CD4-positive, alpha-beta T cell (primary cell): ENCODE measurements at regions of chr10 and their contacts with region 1.

Region 1: DNA sequence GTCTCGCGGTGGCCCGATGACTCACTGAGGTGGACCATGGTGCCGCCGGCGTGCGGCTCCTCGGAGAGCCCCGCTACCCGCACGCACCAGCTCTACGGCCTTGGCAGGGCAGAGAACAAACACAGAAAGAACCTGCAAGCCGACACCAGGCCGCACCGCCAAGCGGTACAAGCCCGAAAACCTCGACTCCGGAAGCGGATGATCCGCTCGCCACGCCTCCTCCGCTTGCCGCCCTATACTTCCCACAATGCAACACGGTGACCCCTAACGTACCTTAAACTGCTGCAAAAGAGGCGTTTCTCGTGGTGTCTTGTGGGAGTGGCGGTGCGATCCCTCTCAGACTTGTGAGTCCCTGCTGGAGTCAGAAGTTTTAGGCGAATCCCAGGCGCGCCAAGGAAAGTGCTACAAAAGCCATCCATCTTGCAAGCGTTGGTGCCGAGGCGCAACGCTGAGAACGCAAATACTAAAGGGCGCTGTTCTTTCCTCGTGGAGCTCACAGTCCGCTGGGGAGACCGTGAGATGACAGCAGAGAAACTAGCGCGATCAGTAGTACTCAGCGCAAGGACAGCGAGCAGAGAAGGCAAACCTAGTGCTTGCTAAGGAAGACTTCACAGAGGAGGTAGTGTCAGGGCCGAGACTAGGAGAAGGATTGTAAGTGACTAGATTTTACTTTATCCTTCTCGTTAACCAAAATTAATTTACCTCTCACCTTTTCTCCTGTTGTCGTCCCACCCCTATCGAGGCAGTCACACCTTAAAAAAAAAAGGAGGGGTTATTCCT is at the start of gene MRPS16:
- DNase-seq: peak; percentile 85 to 97 (median 90)
- ATAC-seq: peak; percentile 87
- H3K4me3 ChIP-seq: peak within 1 kb of the TSS; percentile 93
- H3K4me3 Mint-ChIP-seq: peak within 1 kb of the TSS; percentile 96
- H3K27ac ChIP-seq: peak within 1 kb of the TSS; percentile 78 to 91
- H3K27ac Mint-ChIP-seq: peak within 1 kb of the TSS; percentile 94
- H3K4me1 ChIP-seq: peaks cover 23% of the 10 kb centered on the region
- H3K4me1 Mint-ChIP-seq: peaks cover 40% of the 10 kb centered on the region
- H3K27me3 ChIP-seq: no peaks in the 10 kb centered on the region
- H3K27me3 Mint-ChIP-seq: no peaks in the 10 kb centered on the region
- CTCF ChIP-seq: no peak
- total RNA-seq, gene MRPS16: 28.3 to 31.9 TPM

Region 2: DNA sequence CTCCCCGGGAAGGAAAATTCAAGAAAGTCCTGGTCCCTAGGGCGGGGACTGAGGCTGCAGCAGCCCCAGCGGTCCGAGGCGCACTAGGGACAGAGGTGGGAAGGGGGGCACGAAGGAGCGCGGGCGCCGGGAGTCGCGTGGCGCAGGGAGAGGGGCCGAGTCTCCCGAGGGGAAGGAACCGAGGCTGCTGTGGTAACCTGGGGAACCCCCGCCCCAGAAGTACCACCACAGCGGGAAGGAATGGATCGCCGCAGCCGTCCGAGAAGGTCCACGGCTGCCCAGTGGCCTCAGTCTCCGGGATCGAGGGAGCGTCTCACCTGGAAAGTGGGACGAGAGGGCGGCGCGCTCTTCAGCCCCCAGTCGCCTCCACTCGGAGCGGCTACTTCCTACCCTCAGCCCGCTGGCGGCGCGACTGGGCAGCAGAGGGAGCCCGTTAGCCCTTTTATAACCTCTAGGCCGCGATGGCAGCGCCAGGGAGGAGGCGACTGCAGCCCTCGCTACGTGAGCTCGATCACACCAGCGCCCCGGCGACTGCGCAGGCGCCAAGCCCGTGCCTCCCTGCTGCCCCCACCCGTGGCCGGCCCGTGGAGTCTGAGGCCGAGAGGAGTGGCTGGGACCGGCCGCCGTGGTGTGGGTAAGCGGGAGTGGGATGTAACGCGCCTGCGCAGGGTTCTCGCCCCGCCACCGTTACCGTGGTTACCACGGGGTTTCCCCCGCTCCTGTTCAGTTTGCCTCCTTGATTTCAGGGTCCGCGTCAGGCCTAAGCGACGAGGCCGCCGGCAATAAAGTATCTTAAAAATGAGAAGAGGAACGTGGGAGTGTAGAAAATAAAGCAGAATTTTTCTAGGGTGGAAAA is 156.0 kb before region 1 on chr10 and contains the start of gene P4HA1:
- CTCF ChIA-PET with region 1: interaction called, 3 read pairs
- POLR2A ChIA-PET with region 1: interaction called, 19 read pairs
- intact Hi-C with region 1: loop called in 1 of 2 experiments (anchors 5 kb)
- DNase-seq: peak; percentile 93 to 100 (median 97)
- ATAC-seq: peak; percentile 84
- H3K4me3 ChIP-seq: peak within 1 kb of the TSS; percentile 97
- H3K4me3 Mint-ChIP-seq: peak within 1 kb of the TSS; percentile 94
- H3K27ac ChIP-seq: peak within 1 kb of the TSS; percentile 89 to 98
- H3K27ac Mint-ChIP-seq: peak within 1 kb of the TSS; percentile 87
- H3K4me1 ChIP-seq: peaks cover 7% of the 10 kb centered on the region
- H3K4me1 Mint-ChIP-seq: peaks cover 41% of the 10 kb centered on the region
- H3K27me3 ChIP-seq: no peaks in the 10 kb centered on the region
- H3K27me3 Mint-ChIP-seq: no peaks in the 10 kb centered on the region
- CTCF ChIP-seq: peak; percentile 79
- total RNA-seq, gene P4HA1: 9.0 to 9.1 TPM

Region 3: GRCh38 chr10:73358331-73359279 is 106.0 kb after region 1 on chr10 and contains the start of gene CFAP70:
- CTCF ChIA-PET with region 1: no interaction called
- POLR2A ChIA-PET with region 1: interaction called, 18 read pairs
- intact Hi-C with region 1: loop called (anchors 2 to 5 kb)
- DNase-seq: peak; percentile 85 to 98 (median 92)
- ATAC-seq: peak; percentile 98
- H3K4me3 ChIP-seq: peak within 1 kb of the TSS; percentile 82
- H3K4me3 Mint-ChIP-seq: peak within 1 kb of the TSS; percentile 98
- H3K27ac ChIP-seq: peak within 1 kb of the TSS; percentile 75 to 83
- H3K27ac Mint-ChIP-seq: peak within 1 kb of the TSS; percentile 95
- H3K4me1 ChIP-seq: peaks cover 7% of the 10 kb centered on the region
- H3K4me1 Mint-ChIP-seq: peaks cover 24% of the 10 kb centered on the region
- H3K27me3 ChIP-seq: no peaks in the 10 kb centered on the region
- H3K27me3 Mint-ChIP-seq: no peaks in the 10 kb centered on the region
- CTCF ChIP-seq: no peak
- total RNA-seq, gene CFAP70: 2.6 TPM

Region 4: DNA sequence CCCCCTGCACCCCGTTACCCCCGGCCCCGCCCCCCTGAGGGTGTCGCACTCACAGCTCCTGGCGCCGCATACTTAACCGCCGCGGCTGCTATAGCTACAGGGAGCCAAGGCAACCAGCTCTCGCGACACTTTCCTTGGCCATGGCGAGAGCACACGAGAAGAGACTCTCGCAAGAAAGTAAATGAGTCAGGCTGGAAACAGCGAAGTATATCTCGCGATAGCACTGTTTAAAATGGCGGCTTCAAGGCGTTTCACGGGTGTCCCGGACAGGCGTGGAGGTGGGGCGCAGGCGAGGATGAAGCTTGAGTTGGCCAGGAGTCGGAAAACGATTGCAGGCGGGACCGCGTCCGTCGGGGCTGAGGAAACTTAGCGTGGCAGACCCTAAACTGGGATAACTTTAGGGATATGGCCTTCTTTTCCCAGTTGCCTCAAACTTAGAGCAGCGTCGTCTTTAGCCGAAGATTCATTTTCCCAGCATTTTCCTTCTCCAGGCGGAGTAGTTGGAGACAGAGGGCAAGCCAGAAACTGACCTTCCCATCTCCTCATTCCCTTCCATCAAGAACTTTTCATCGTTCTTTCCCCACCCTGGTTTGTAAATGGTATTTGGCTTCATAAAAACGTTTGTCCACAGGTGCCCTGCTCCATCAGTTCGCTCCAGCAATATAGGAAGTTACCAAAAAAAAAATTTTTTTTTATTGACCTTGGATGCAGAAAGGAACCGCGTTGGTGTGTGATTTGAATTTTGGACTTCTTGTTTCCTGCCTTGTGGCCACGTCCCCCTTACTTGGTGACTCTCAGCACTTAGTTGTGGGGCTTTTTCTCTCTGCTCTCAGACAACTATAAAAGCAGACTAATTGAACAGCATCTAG is 373.5 kb after region 1 on chr10:
- CTCF ChIA-PET with region 1: no interaction called
- POLR2A ChIA-PET with region 1: interaction called, 8 read pairs
- intact Hi-C with region 1: loop called in 1 of 2 experiments (anchors 5 kb)
- DNase-seq: peak; percentile 84 to 99 (median 90)
- ATAC-seq: peak; percentile 94
- H3K4me3 ChIP-seq: peak overlapping the region; percentile 68
- H3K4me3 Mint-ChIP-seq: peak overlapping the region; percentile 91
- H3K27ac ChIP-seq: peak overlapping the region; percentile 62 to 66
- H3K27ac Mint-ChIP-seq: peak overlapping the region; percentile 90
- H3K4me1 ChIP-seq: peaks cover 17% of the 10 kb centered on the region
- H3K4me1 Mint-ChIP-seq: peaks cover 25% of the 10 kb centered on the region
- H3K27me3 ChIP-seq: no peaks in the 10 kb centered on the region
- H3K27me3 Mint-ChIP-seq: no peaks in the 10 kb centered on the region
- CTCF ChIP-seq: no peak

Region 5: DNA sequence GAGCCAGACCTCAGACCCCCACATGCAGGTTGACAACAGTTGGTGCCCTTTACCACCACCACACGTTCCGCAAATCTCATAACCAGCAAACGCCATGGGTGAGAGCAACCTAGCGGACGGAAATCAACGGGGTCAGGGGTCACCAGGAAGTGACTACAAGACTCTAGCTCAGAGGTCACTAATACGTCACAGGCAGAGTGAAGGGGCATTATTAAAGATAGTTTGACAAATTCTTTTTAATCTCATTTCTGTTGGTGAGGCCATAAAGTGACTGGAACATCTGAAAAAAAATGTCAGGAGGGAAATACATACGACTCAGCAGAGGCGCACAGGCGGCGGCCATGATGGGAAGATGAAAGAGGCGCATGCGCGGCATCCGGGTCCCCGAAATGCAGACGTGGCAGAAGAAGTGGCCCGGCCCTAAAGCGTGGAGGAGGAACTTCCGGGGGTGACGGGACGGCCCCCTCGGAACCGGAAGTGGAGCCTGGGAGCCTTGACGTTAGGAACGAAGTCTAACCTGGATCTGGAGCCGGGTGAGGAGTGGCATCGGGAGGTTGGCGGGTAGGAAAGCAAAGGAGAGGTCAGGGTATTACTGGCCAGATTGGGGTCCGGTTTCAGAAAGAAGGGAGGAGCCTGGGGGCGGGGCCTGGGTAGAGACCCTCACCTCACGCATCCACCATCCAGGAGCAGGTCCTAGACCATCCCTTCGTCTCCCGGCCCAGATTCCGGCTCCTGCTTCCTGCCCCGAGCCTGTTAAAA is 491.4 kb after region 1 on chr10 and contains the start of gene SEC24C:
- CTCF ChIA-PET with region 1: no interaction called
- POLR2A ChIA-PET with region 1: interaction called, 3 read pairs
- intact Hi-C with region 1: loop called in 1 of 2 experiments (anchors 10 kb)
- DNase-seq: peak; percentile 90 to 99 (median 94)
- ATAC-seq: peak; percentile 85
- H3K4me3 ChIP-seq: peak within 1 kb of the TSS; percentile 93
- H3K4me3 Mint-ChIP-seq: peak within 1 kb of the TSS; percentile 99
- H3K27ac ChIP-seq: peak within 1 kb of the TSS; percentile 90 to 99
- H3K27ac Mint-ChIP-seq: peak within 1 kb of the TSS; percentile 99
- H3K4me1 ChIP-seq: peaks cover 48% of the 10 kb centered on the region
- H3K4me1 Mint-ChIP-seq: peaks cover 41% of the 10 kb centered on the region
- H3K27me3 ChIP-seq: no peaks in the 10 kb centered on the region
- H3K27me3 Mint-ChIP-seq: no peaks in the 10 kb centered on the region
- CTCF ChIP-seq: no peak
- total RNA-seq, gene SEC24C: 52.0 to 54.2 TPM